ENCODE measurements at regions of chr4 and their contacts with region 1.

Region 1: GRCh38 chr4:121096629-121097028 is 24.3 kb upstream of the NDNF start:
- DNase-seq: no peak
- ATAC-seq: no peak
- H3K4me3 ChIP-seq: no peak overlapping the region
- H3K4me3 Mint-ChIP-seq: no peak overlapping the region
- H3K27ac ChIP-seq: no peak overlapping the region
- H3K27ac Mint-ChIP-seq: no peak overlapping the region
- H3K4me1 ChIP-seq: no peaks in the 10 kb centered on the region
- H3K4me1 Mint-ChIP-seq: no peaks in the 10 kb centered on the region
- H3K27me3 ChIP-seq: no peaks in the 10 kb centered on the region
- H3K27me3 Mint-ChIP-seq: no peaks in the 10 kb centered on the region
- CTCF ChIP-seq: no peak

Region 2: DNA sequence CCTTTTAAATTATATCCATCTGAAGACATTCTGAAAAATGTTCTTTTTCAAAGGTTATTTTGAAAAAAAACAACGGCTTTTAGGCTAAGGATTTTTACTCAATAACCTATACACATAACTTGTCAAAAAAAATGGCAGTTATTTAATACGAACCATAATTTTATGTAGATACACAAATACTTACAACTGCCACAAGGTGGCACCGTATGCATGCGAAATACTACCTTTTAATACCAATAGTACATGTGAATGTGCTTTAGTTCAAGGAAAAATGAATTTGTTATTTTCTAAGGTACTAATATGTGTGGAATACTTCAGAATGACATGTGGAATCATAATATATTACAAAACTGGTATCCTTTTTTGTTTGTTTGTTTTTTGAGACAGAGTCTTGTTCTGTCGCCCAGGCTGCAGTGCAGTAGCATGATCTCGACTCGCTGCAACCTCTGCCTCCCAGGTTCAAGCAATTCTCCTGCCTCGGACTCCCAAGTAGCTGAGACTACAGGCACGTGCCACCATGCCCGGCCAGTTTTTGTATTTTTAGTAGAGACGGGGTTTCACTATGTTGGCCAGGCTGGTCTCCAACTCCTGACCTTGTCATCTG is 1025.3 kb before region 1 on chr4:
- CTCF ChIA-PET with region 1: no interaction called
- POLR2A ChIA-PET with region 1: no interaction called
- intact Hi-C with region 1: loop called (anchors 2 kb)
- DNase-seq: peak; percentile 75
- ATAC-seq: no peak
- H3K4me3 ChIP-seq: no peak overlapping the region
- H3K4me3 Mint-ChIP-seq: no peak overlapping the region
- H3K27ac ChIP-seq: no peak overlapping the region
- H3K27ac Mint-ChIP-seq: no peak overlapping the region
- H3K4me1 ChIP-seq: peaks cover 10% of the 10 kb centered on the region in 2 donors
- H3K4me1 Mint-ChIP-seq: peaks cover 25% of the 10 kb centered on the region
- H3K27me3 ChIP-seq: no peaks in the 10 kb centered on the region
- H3K27me3 Mint-ChIP-seq: no peaks in the 10 kb centered on the region
- CTCF ChIP-seq: peak; percentile 86

Region 3: GRCh38 chr4:120156120-120156718 is 940.4 kb before region 1 on chr4:
- CTCF ChIA-PET with region 1: no interaction called
- POLR2A ChIA-PET with region 1: no interaction called
- intact Hi-C with region 1: loop called (anchors 5 kb)
- DNase-seq: peak; percentile 62
- ATAC-seq: no peak
- H3K4me3 ChIP-seq: no peak overlapping the region
- H3K4me3 Mint-ChIP-seq: no peak overlapping the region
- H3K27ac ChIP-seq: no peak overlapping the region
- H3K27ac Mint-ChIP-seq: no peak overlapping the region
- H3K4me1 ChIP-seq: no peaks in the 10 kb centered on the region
- H3K4me1 Mint-ChIP-seq: no peaks in the 10 kb centered on the region
- H3K27me3 ChIP-seq: no peaks in the 10 kb centered on the region
- H3K27me3 Mint-ChIP-seq: peaks cover 10% of the 10 kb centered on the region
- CTCF ChIP-seq: peak; percentile 87

Region 4: GRCh38 chr4:121077483-121077882 is 19.1 kb before region 1 on chr4:
- CTCF ChIA-PET with region 1: no interaction called
- POLR2A ChIA-PET with region 1: no interaction called
- intact Hi-C with region 1: no loop called
- DNase-seq: no peak
- ATAC-seq: no peak
- H3K4me3 ChIP-seq: no peak overlapping the region
- H3K4me3 Mint-ChIP-seq: no peak overlapping the region
- H3K27ac ChIP-seq: no peak overlapping the region
- H3K27ac Mint-ChIP-seq: no peak overlapping the region
- H3K4me1 ChIP-seq: peaks cover 4 to 5% of the 10 kb centered on the region in 2 donors
- H3K4me1 Mint-ChIP-seq: peaks cover 5% of the 10 kb centered on the region
- H3K27me3 ChIP-seq: peaks cover 0 to 24% (median 21%) of the 10 kb centered on the region in 4 experiments
- H3K27me3 Mint-ChIP-seq: peaks cover 46% of the 10 kb centered on the region
- CTCF ChIP-seq: no peak

Region 5: GRCh38 chr4:121139533-121140222 is 43.0 kb after region 1 on chr4:
- CTCF ChIA-PET with region 1: no interaction called
- POLR2A ChIA-PET with region 1: no interaction called
- intact Hi-C with region 1: no loop called
- DNase-seq: no peak
- ATAC-seq: no peak
- H3K4me3 ChIP-seq: no peak overlapping the region
- H3K4me3 Mint-ChIP-seq: no peak overlapping the region
- H3K27ac ChIP-seq: no peak overlapping the region
- H3K27ac Mint-ChIP-seq: no peak overlapping the region
- H3K4me1 ChIP-seq: no peaks in the 10 kb centered on the region
- H3K4me1 Mint-ChIP-seq: no peaks in the 10 kb centered on the region
- H3K27me3 ChIP-seq: no peaks in the 10 kb centered on the region
- H3K27me3 Mint-ChIP-seq: no peaks in the 10 kb centered on the region
- CTCF ChIP-seq: no peak